ENCODE measurements at regions of chr1 and their contacts with region 1.

Region 1: DNA sequence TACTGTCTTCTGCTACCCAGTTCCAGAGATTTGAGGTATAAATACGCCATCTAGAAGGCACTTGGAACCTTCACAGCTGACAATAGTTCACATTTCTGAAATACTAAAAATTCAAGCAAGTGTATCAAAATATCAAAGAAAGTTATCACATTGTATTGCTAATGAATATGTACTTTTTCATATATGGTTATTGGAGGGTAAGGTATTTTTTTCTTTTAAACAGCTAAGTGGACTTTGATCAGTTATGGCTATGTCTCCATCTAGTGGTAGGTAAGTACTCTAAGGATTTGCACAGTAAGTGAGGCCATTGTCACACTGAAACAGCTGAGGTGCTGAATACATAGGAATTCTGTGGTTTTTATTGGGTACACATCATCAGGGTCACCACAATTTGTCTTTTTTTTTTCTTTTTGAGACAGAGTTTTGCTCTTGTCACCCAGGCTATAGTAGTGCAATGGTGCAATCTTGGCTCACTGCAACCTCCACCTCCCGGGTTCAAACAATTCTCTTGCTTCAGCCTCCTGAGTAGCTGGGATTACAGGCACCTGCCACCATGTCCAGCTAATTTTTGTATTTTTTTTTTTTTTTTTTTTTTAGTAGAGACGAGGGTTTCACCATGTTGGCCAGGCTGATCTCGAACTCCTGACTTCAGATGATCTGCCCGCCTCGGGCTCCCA is 49.1 kb upstream of the CR2 start:
- DNase-seq: no peak
- ATAC-seq: peak; percentile 84 to 88
- H3K4me3 ChIP-seq: no peak overlapping the region
- H3K27ac ChIP-seq: no peak overlapping the region
- H3K4me1 ChIP-seq: no peaks in the 10 kb centered on the region
- H3K27me3 ChIP-seq: no peaks in the 10 kb centered on the region
- CTCF ChIP-seq: peak; percentile 83

Region 2: DNA sequence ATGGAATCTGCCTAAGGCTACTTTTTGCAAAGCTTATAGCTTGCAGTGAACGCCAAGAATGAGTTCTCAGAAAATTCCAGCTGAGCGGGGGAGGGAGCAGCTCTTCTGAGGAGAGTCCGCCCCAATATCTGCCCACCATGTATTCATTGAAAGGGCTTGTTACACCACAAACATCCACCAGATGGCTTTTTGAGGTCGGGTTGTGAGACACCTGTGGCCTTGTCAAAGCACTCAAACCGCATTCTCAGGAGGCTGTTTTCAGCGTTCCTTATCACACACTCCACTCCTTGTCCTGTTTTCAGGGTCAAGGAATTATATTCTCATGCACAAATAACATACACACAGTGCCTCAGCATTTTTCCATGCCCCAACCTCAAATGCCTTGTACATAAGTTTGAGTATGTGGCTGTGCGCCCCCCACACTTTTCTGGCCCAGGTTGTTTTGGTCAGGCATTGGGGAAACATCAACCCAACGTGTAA is 320.2 kb before region 1 on chr1:
- intact Hi-C with region 1: loop called (anchors 10 kb)
- DNase-seq: no peak
- ATAC-seq: peak; percentile 83 to 87
- H3K4me3 ChIP-seq: no peak overlapping the region
- H3K27ac ChIP-seq: peak overlapping the region; percentile 34
- H3K4me1 ChIP-seq: peaks cover 32% of the 10 kb centered on the region
- H3K27me3 ChIP-seq: no peaks in the 10 kb centered on the region
- CTCF ChIP-seq: peak; percentile 64

Region 3: GRCh38 chr1:207336559-207337467 is 68.2 kb before region 1 on chr1:
- intact Hi-C with region 1: no loop called
- DNase-seq: no peak
- ATAC-seq: peak; percentile 85 to 87
- H3K4me3 ChIP-seq: no peak overlapping the region
- H3K27ac ChIP-seq: peak overlapping the region; percentile 57
- H3K4me1 ChIP-seq: peaks cover 33% of the 10 kb centered on the region
- H3K27me3 ChIP-seq: no peaks in the 10 kb centered on the region
- CTCF ChIP-seq: no peak